Activated CD4-positive, alpha-beta T cell treated with anti-CD3 and anti-CD28 coated beads for 36 hours (primary cell): ENCODE measurements at regions of chr6 and their contacts with region 1.

Region 1: DNA sequence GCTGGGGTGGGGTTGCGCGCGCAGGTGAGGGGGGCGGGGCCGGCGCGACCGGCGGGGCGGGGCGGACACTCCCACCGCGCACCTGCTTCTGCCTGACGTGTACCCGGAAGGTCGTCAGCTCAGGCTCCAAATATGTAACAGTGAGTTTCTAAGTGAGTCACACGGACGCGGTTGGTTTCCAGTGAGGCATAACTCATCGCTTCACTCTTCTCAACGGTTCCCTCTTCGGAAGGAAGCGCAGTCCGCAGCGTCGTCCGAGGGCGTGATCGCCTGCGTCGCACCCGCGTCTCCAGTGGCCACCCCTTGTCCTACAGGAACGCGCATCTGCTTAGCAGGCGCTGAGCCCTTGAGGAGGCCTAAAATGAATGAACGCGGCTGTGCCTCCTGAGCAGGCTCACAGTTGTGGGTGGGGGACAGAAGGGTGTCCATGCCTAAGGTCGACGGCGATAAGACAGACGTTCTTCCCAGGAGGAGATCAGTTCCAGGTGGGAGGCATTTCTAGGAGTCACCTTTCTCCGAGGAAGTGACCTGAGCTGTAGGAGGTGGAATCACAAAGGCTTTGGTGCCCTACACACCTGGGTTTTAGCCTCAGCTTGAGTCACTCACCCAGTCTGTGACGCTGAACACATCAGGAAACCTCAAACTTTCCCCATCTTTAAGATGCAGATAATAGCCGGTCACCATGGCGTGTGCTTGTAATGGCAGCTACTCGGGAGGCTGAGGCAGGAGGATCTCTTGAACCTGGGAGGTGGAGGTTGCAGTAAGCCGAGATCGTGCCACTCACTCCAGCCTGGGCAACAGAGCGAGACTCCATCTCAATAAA is 50.9 kb upstream of the EZR start:
- DNase-seq: peak; percentile 98
- ATAC-seq: peak; percentile 90
- H3K4me3 Mint-ChIP-seq: peak overlapping the region; percentile 75
- H3K27ac Mint-ChIP-seq: peak overlapping the region; percentile 95
- H3K4me1 Mint-ChIP-seq: peaks cover 37% of the 10 kb centered on the region
- H3K27me3 Mint-ChIP-seq: no peaks in the 10 kb centered on the region

Region 2: GRCh38 chr6:157830354-157831017 is 1039.6 kb before region 1 on chr6:
- CTCF ChIA-PET with region 1: no interaction called
- POLR2A ChIA-PET with region 1: no interaction called
- intact Hi-C with region 1: loop called in 1 of 2 experiments (anchors 10 kb)
- DNase-seq: no peak
- ATAC-seq: peak; percentile 48
- H3K4me3 Mint-ChIP-seq: peak overlapping the region; percentile 37
- H3K27ac Mint-ChIP-seq: peak overlapping the region; percentile 75
- H3K4me1 Mint-ChIP-seq: peaks cover 76% of the 10 kb centered on the region
- H3K27me3 Mint-ChIP-seq: no peaks in the 10 kb centered on the region

Region 3: DNA sequence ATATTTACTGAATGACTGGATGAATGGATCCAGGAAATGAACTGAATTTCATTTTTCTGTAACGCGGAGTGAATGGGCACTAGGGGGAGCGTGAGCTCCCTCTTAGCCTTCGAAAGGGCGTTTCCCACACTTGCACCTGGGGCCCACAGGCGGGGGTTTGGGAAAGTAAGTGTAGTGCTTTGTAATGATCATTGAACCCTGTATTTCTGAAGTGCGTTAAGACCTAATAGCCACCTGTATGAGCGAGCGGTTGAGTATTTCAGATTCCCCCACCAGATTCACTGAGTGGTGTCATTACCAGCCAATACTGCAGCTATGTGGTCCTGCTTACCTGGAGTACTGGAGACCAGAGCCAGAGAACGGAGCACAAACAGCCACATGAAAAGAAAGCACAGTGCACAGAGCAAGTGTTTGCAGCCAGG is 209.7 kb before region 1 on chr6:
- CTCF ChIA-PET with region 1: no interaction called
- POLR2A ChIA-PET with region 1: no interaction called
- intact Hi-C with region 1: no loop called
- DNase-seq: peak; percentile 61
- ATAC-seq: peak; percentile 65
- H3K4me3 Mint-ChIP-seq: no peak overlapping the region
- H3K27ac Mint-ChIP-seq: no peak overlapping the region
- H3K4me1 Mint-ChIP-seq: peaks cover 53% of the 10 kb centered on the region
- H3K27me3 Mint-ChIP-seq: no peaks in the 10 kb centered on the region

Region 4: GRCh38 chr6:158853072-158853871 is 16.8 kb before region 1 on chr6:
- CTCF ChIA-PET with region 1: interaction called, 22 read pairs
- POLR2A ChIA-PET with region 1: interaction called, 34 read pairs
- intact Hi-C with region 1: loop called (anchors 1 kb)
- DNase-seq: peak; percentile 94
- ATAC-seq: peak; percentile 83
- H3K4me3 Mint-ChIP-seq: no peak overlapping the region
- H3K27ac Mint-ChIP-seq: no peak overlapping the region
- H3K4me1 Mint-ChIP-seq: peaks cover 29% of the 10 kb centered on the region
- H3K27me3 Mint-ChIP-seq: no peaks in the 10 kb centered on the region

Region 5: DNA sequence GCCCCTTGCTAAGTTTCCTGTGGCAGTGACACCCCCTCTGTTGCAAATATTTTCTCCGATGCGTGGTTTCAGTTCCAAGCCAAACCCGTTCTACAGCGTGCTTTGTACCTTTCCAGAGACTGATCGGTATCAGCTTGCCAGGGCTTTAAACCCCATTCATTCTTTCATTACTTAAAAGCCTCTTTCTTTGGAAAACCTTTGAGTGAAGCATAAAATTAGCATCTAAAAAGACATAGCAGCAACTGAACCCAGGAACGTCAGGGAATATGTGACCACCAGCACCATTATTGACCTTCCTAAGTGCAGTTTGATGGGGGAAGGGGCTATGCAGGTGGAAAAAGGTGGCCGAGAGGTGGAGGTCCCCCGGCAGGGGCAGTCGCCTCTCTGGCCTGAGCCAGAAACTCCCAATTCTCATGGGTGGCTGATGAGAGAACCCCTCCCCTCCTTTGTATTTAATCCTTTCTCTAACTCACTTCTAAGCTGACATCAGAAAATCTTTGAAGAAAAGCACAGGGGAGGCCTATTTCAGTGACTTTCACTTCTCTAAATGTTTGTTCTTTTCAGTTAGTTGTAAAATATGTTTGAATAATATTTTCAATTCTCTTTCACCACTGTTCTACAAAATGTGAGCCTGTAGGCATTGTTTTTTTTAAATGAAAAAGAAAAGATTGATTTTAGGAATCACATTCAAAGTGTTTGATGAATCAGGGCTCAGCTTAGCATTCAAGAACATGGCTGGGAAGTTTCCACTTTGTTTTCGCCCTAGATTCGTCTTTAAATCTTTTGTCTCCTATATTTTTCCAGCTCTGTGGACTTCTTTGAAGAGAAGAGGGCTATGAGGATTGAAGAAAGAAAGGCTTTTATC is 40.7 kb after region 1 on chr6:
- CTCF ChIA-PET with region 1: no interaction called
- POLR2A ChIA-PET with region 1: no interaction called
- intact Hi-C with region 1: loop called in 1 of 2 experiments (anchors 5 kb)
- DNase-seq: peak; percentile 16
- ATAC-seq: peak; percentile 40
- H3K4me3 Mint-ChIP-seq: peak overlapping the region; percentile 25
- H3K27ac Mint-ChIP-seq: peak overlapping the region; percentile 43
- H3K4me1 Mint-ChIP-seq: peaks cover 29% of the 10 kb centered on the region
- H3K27me3 Mint-ChIP-seq: no peaks in the 10 kb centered on the region

Region 6: GRCh38 chr6:158999666-159000403 is 129.8 kb after region 1 on chr6 and contains the start of gene RSPH3:
- CTCF ChIA-PET with region 1: no interaction called
- POLR2A ChIA-PET with region 1: interaction called, 4 read pairs
- intact Hi-C with region 1: loop called (anchors 1 to 5 kb)
- DNase-seq: peak; percentile 97
- ATAC-seq: peak; percentile 86
- H3K4me3 Mint-ChIP-seq: peak within 1 kb of the TSS; percentile 82
- H3K27ac Mint-ChIP-seq: peak within 1 kb of the TSS; percentile 66
- H3K4me1 Mint-ChIP-seq: peaks cover 46% of the 10 kb centered on the region
- H3K27me3 Mint-ChIP-seq: no peaks in the 10 kb centered on the region
- total RNA-seq, gene RSPH3: 6.5 to 9.3 TPM